ENCODE measurements at regions of chr5 and their contacts with region 1.

Region 1: DNA sequence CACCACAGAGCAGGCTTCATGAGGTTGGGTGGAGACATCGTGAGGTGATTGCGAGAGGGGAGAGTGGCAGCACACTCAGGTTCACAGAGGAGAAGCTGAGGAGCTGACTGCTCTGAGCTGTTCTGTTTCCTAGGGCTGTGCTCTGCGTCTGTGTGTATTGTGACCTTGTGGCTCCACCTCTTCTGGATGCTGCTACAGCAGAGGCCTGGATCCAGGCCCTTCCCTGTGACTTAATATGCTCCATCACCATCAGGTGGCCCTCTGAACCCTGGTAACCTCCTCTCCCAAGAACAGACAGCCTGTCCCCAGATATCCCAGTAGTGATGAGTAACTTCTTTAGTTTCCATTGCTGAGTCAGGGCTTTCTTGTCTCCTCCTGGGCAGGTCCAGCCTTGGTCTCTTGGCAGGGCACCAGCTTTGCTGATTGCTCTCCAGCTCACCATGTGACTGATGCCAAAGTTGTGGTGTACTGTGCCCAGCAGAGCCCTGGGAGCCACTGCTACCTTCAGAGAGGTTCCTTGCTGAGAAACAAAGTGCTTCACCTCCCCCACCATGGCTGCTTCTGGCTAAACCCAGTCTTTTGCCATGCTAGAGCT is 212.8 kb upstream of the CHD1 start:
- DNase-seq: no peak
- ATAC-seq: no peak
- H3K4me3 Mint-ChIP-seq: no peak overlapping the region
- H3K27ac Mint-ChIP-seq: no peak overlapping the region
- H3K4me1 Mint-ChIP-seq: no peaks in the 10 kb centered on the region
- H3K27me3 Mint-ChIP-seq: peaks cover 6% of the 10 kb centered on the region
- CTCF ChIP-seq: no peak

Region 2: DNA sequence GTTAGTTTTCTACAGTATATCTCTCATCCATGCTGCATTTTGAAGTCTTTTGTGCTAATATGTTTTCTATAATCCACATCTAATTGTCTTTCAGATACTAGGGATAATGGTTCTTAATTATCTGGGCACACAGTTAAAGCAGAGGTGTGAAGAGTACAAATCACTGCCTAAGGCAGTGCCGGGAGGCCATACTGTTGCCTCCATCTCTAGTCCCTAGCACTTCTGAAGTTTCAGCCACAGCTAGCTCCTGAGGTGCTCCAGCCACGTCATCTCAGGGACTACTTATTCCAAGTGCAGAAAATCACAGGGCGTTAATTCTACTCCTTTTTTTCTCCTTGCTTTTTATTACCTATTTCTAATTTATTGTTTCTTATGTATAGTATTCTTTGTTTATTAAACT is 633.6 kb after region 1 on chr5:
- CTCF ChIA-PET with region 1: no interaction called
- POLR2A ChIA-PET with region 1: no interaction called
- intact Hi-C with region 1: loop called (anchors 5 kb)
- DNase-seq: no peak
- ATAC-seq: no peak
- H3K4me3 Mint-ChIP-seq: no peak overlapping the region
- H3K27ac Mint-ChIP-seq: no peak overlapping the region
- H3K4me1 Mint-ChIP-seq: no peaks in the 10 kb centered on the region
- H3K27me3 Mint-ChIP-seq: no peaks in the 10 kb centered on the region
- CTCF ChIP-seq: no peak